B cell (primary cell): ENCODE measurements at regions of chr14 and their contacts with region 1.

Region 1: GRCh38 chr14:80850197-80850814 is 91.2 kb downstream of the CEP128 start:
- DNase-seq: peak; percentile 25
- ATAC-seq: no peak
- H3K4me3 ChIP-seq: no peak overlapping the region
- H3K4me3 Mint-ChIP-seq: no peak overlapping the region
- H3K27ac ChIP-seq: no peak overlapping the region
- H3K27ac Mint-ChIP-seq: no peak overlapping the region
- H3K4me1 ChIP-seq: no peaks in the 10 kb centered on the region
- H3K4me1 Mint-ChIP-seq: no peaks in the 10 kb centered on the region
- H3K27me3 ChIP-seq: no peaks in the 10 kb centered on the region
- H3K27me3 Mint-ChIP-seq: no peaks in the 10 kb centered on the region
- CTCF ChIP-seq: peak; percentile 74

Region 2: DNA sequence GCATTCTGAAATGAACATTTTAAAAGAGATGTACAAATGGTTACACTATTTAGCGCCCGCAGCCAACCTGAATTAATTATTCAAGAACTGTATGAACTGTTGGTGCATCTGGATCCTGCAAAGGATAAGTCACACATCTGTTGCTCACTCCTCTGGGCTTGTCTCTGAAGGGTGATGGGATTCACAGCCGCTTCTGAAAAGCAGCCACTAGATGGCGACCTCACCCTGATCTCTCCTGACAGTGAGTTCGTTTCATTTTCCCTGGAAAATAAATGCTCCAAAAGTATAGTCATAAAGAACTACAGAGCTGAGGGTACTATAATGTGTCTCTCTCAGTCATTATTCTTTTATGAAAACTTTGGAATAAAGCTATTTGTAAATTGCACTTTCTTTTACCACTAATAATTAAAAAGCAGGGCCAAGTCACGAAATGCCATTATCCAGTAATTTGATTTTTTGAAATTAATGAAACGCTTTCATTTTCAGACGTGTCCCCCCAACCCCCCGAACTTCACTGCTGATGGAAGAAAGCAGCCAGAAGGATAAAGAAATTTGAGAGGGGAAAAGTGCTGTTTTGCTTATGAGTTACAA is 1890.5 kb before region 1 on chr14:
- CTCF ChIA-PET with region 1: interaction called, 24 read pairs
- POLR2A ChIA-PET with region 1: no interaction called
- intact Hi-C with region 1: loop called (anchors 2 kb)
- DNase-seq: peak; percentile 30
- ATAC-seq: no peak
- H3K4me3 ChIP-seq: no peak overlapping the region
- H3K4me3 Mint-ChIP-seq: no peak overlapping the region
- H3K27ac ChIP-seq: no peak overlapping the region
- H3K27ac Mint-ChIP-seq: no peak overlapping the region
- H3K4me1 ChIP-seq: no peaks in the 10 kb centered on the region
- H3K4me1 Mint-ChIP-seq: no peaks in the 10 kb centered on the region
- H3K27me3 ChIP-seq: no peaks in the 10 kb centered on the region
- H3K27me3 Mint-ChIP-seq: no peaks in the 10 kb centered on the region
- CTCF ChIP-seq: peak; percentile 88

Region 3: GRCh38 chr14:80919622-80920021 is 69.3 kb after region 1 on chr14:
- CTCF ChIA-PET with region 1: no interaction called
- POLR2A ChIA-PET with region 1: no interaction called
- intact Hi-C with region 1: no loop called
- DNase-seq: no peak
- ATAC-seq: no peak
- H3K4me3 ChIP-seq: no peak overlapping the region
- H3K4me3 Mint-ChIP-seq: no peak overlapping the region
- H3K27ac ChIP-seq: no peak overlapping the region
- H3K27ac Mint-ChIP-seq: no peak overlapping the region
- H3K4me1 ChIP-seq: no peaks in the 10 kb centered on the region
- H3K4me1 Mint-ChIP-seq: no peaks in the 10 kb centered on the region
- H3K27me3 ChIP-seq: no peaks in the 10 kb centered on the region
- H3K27me3 Mint-ChIP-seq: no peaks in the 10 kb centered on the region
- CTCF ChIP-seq: no peak

Region 4: DNA sequence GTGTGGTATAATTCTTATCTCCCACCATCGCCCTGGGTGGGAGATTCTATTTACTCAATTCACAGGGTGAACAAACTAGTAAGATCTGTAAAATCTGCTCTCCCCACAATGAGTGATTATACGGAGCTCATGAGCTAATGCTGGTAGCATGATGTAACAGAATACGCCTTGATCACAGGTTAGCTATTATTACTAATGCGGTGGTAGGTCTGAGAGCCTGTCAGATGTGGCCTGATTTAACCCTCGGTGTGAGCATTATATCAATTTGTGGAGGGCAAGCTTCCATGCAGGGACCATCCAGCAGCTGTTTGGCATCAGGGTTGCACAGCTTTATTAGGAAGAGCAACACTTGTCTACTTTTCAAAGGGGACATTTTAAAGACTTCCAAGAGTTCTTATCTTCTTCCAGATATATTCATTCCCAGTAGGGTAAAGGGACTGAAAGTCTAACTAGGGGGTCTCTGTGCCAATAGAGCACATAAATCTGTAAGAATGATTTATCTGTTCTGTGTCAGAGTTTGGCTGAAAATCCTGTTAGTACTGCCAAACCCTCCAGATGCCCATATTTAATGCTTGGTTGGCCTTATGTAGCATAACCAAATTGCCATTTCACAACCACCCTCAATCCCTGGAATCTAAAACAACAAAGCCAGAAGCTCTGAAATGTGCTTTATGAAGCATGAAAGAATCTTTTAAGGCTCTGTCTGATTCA is 123.8 kb after region 1 on chr14:
- CTCF ChIA-PET with region 1: no interaction called
- POLR2A ChIA-PET with region 1: no interaction called
- intact Hi-C with region 1: no loop called
- DNase-seq: no peak
- ATAC-seq: no peak
- H3K4me3 ChIP-seq: no peak overlapping the region
- H3K4me3 Mint-ChIP-seq: no peak overlapping the region
- H3K27ac ChIP-seq: no peak overlapping the region
- H3K27ac Mint-ChIP-seq: no peak overlapping the region
- H3K4me1 ChIP-seq: no peaks in the 10 kb centered on the region
- H3K4me1 Mint-ChIP-seq: no peaks in the 10 kb centered on the region
- H3K27me3 ChIP-seq: no peaks in the 10 kb centered on the region
- H3K27me3 Mint-ChIP-seq: peaks cover 17% of the 10 kb centered on the region
- CTCF ChIP-seq: no peak